ENCODE measurements at regions of chr7 and their contacts with region 1.

Region 1: GRCh38 chr7:64758164-64758563 is 36.1 kb upstream of the ZNF138 start:
- DNase-seq: no peak
- ATAC-seq: no peak
- H3K4me3 ChIP-seq: no peak overlapping the region
- H3K27ac ChIP-seq: no peak overlapping the region
- H3K4me1 ChIP-seq: no peaks in the 10 kb centered on the region
- H3K27me3 ChIP-seq: no peaks in the 10 kb centered on the region
- CTCF ChIP-seq: no peak

Region 2: GRCh38 chr7:65373608-65374351 is 615.6 kb after region 1 on chr7 and contains the start of gene ZNF92:
- intact Hi-C with region 1: loop called in 1 of 3 experiments (anchors 10 kb)
- DNase-seq: peak; percentile 92 to 95 (median 94)
- ATAC-seq: peak; percentile 98 to 100 (median 98)
- H3K4me3 ChIP-seq: peak within 1 kb of the TSS; percentile 71 to 87 (median 77)
- H3K27ac ChIP-seq: peak within 1 kb of the TSS; percentile 56 to 84 (median 80)
- H3K4me1 ChIP-seq: peaks cover 0 to 11% (median 4%) of the 10 kb centered on the region in 3 donors
- H3K27me3 ChIP-seq: no peaks in the 10 kb centered on the region
- CTCF ChIP-seq: no peak
- total RNA-seq, gene ZNF92: 2.5 to 5.5 (median 3.6) TPM

Region 3: GRCh38 chr7:65438598-65438997 is 680.4 kb after region 1 on chr7:
- intact Hi-C with region 1: no loop called
- DNase-seq: no peak
- ATAC-seq: peak in 2 of 4 donors; percentile 18 to 36
- H3K4me3 ChIP-seq: no peak overlapping the region
- H3K27ac ChIP-seq: no peak overlapping the region
- H3K4me1 ChIP-seq: no peaks in the 10 kb centered on the region
- H3K27me3 ChIP-seq: no peaks in the 10 kb centered on the region
- CTCF ChIP-seq: no peak